ENCODE measurements at regions of chr11 and their contacts with region 1.

Region 1: DNA sequence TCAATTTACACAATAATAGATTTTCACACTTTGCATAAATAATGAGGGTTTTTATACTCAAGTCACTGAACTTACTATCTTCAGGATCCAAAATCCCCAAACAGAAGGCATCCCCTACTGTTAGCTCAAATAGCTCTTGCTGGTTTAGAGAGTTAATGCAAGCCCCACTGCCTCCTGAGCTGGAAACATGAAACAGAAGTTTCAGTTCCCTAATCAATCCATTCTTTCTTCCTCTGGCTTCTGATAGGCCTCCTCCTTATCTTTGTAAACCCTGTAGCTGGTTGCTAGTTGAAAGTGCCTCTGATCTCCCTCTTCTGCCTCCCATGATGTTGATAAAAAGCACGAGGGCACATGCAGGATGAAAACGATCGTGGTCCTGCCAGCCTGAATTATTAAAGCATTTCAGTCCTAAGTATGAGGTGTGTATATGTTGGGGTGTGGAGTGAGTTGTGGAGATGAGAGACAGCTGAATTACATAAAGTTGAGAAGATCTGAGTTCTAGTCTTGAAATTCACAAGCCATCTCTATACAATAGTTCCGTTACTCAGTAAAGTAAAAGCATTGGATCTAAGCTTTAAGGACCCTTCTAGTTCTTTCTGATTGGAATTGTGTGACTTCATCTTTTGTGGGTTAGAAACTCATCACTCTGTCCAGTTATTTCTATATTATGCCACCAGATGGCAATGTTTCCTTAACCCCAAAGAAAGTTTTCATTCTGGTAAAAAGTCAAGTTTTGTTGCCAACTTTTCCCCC is 35.0 kb upstream of the EHF start:
- DNase-seq: peak in 6 of 9 donors; percentile 5 to 47 (median 40)
- ATAC-seq: peak; percentile 60
- H3K4me3 ChIP-seq: no peak overlapping the region
- H3K4me3 Mint-ChIP-seq: no peak overlapping the region
- H3K27ac ChIP-seq: no peak overlapping the region
- H3K27ac Mint-ChIP-seq: no peak overlapping the region
- H3K4me1 ChIP-seq: peaks cover 0 to 4% of the 10 kb centered on the region in 2 donors
- H3K4me1 Mint-ChIP-seq: peaks cover 0 to 5% (median 0%) of the 10 kb centered on the region in 7 donors
- H3K27me3 ChIP-seq: no peaks in the 10 kb centered on the region
- H3K27me3 Mint-ChIP-seq: peaks cover 0 to 33% (median 18%) of the 10 kb centered on the region in 5 donors

Region 2: GRCh38 chr11:34653826-34654490 is 68.0 kb after region 1 on chr11:
- CTCF ChIA-PET with region 1: no interaction called
- POLR2A ChIA-PET with region 1: no interaction called
- intact Hi-C with region 1: loop called in 1 of 2 experiments (anchors 2 kb)
- DNase-seq: no peak
- ATAC-seq: peak; percentile 26
- H3K4me3 ChIP-seq: no peak overlapping the region
- H3K4me3 Mint-ChIP-seq: no peak overlapping the region
- H3K27ac ChIP-seq: no peak overlapping the region
- H3K27ac Mint-ChIP-seq: peak overlapping the region in 1 of 9 donors; percentile 29
- H3K4me1 ChIP-seq: peaks cover 21 to 30% of the 10 kb centered on the region in 2 donors
- H3K4me1 Mint-ChIP-seq: peaks cover 13 to 44% (median 32%) of the 10 kb centered on the region in 7 donors
- H3K27me3 ChIP-seq: no peaks in the 10 kb centered on the region
- H3K27me3 Mint-ChIP-seq: peaks cover 13 to 67% (median 40%) of the 10 kb centered on the region in 5 donors

Region 3: GRCh38 chr11:34890812-34891211 is 304.9 kb after region 1 on chr11:
- CTCF ChIA-PET with region 1: interaction called, 37 read pairs
- POLR2A ChIA-PET with region 1: no interaction called
- intact Hi-C with region 1: loop called (anchors 1 kb)
- DNase-seq: peak in 4 of 9 donors; percentile 1 to 23 (median 11)
- ATAC-seq: no peak
- H3K4me3 ChIP-seq: no peak overlapping the region
- H3K4me3 Mint-ChIP-seq: no peak overlapping the region
- H3K27ac ChIP-seq: no peak overlapping the region
- H3K27ac Mint-ChIP-seq: no peak overlapping the region
- H3K4me1 ChIP-seq: no peaks in the 10 kb centered on the region
- H3K4me1 Mint-ChIP-seq: peaks cover 0 to 5% (median 0%) of the 10 kb centered on the region in 7 donors
- H3K27me3 ChIP-seq: no peaks in the 10 kb centered on the region
- H3K27me3 Mint-ChIP-seq: no peaks in the 10 kb centered on the region

Region 4: GRCh38 chr11:34997952-34998528 is 412.1 kb after region 1 on chr11:
- CTCF ChIA-PET with region 1: no interaction called
- POLR2A ChIA-PET with region 1: no interaction called
- intact Hi-C with region 1: loop called in 1 of 2 experiments (anchors 5 kb)
- DNase-seq: peak in 6 of 9 donors; percentile 27 to 54 (median 44)
- ATAC-seq: peak; percentile 72
- H3K4me3 ChIP-seq: no peak overlapping the region
- H3K4me3 Mint-ChIP-seq: peak overlapping the region in 9 of 10 donors; percentile 6 to 81 (median 34)
- H3K27ac ChIP-seq: peak overlapping the region; percentile 8
- H3K27ac Mint-ChIP-seq: peak overlapping the region; percentile 15 to 90 (median 69)
- H3K4me1 ChIP-seq: peaks cover 15 to 19% of the 10 kb centered on the region in 2 donors
- H3K4me1 Mint-ChIP-seq: peaks cover 19 to 38% (median 35%) of the 10 kb centered on the region in 7 donors
- H3K27me3 ChIP-seq: no peaks in the 10 kb centered on the region
- H3K27me3 Mint-ChIP-seq: no peaks in the 10 kb centered on the region

Region 5: DNA sequence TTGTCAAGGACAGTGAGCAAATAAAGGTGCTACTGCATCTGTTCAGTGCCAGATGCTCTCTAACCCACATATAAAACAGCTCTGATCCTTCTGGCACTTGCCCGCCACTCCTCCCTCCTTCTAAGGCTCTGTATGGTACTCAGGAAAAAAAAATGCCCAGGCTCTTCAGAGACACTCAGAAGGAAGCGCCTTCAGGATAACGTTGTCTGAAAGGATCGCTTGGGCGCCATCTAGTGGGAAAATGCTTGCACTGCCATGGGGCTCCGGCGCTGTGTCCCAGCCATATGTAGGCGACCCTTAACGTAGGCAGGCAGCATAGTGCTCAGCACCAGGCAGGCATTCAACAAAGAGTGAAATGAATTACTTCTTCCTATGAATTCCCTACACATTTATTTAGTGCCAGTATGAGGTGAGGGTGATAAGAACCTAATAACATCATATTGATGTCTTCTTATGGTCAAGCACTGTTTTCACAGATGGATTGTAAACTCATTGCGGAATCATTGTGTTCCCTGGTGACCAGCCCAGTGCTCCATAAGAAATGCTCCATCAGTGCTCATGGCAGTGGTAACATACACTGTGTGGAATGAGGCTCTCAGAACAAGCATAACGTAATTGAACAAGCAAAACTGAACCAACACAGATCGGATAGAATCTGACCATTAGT is 899.9 kb after region 1 on chr11:
- CTCF ChIA-PET with region 1: interaction called, 15 read pairs
- POLR2A ChIA-PET with region 1: no interaction called
- intact Hi-C with region 1: loop called (anchors 1 kb)
- DNase-seq: peak; percentile 35 to 71 (median 52)
- ATAC-seq: peak; percentile 84
- H3K4me3 ChIP-seq: no peak overlapping the region
- H3K4me3 Mint-ChIP-seq: no peak overlapping the region
- H3K27ac ChIP-seq: no peak overlapping the region
- H3K27ac Mint-ChIP-seq: no peak overlapping the region
- H3K4me1 ChIP-seq: no peaks in the 10 kb centered on the region
- H3K4me1 Mint-ChIP-seq: peaks cover 0 to 3% (median 0%) of the 10 kb centered on the region in 7 donors
- H3K27me3 ChIP-seq: no peaks in the 10 kb centered on the region
- H3K27me3 Mint-ChIP-seq: peaks cover 30 to 52% (median 48%) of the 10 kb centered on the region in 5 donors